ENCODE measurements at regions of chr19 and their contacts with region 1.

Region 1: GRCh38 chr19:41263850-41264580 is at the start of gene HNRNPUL1:
- DNase-seq: peak; percentile 99
- ATAC-seq: peak; percentile 75
- H3K4me3 Mint-ChIP-seq: peak within 1 kb of the TSS; percentile 82
- H3K27ac Mint-ChIP-seq: peak within 1 kb of the TSS; percentile 99
- H3K4me1 Mint-ChIP-seq: peaks cover 44% of the 10 kb centered on the region
- H3K27me3 Mint-ChIP-seq: peaks cover 2% of the 10 kb centered on the region
- total RNA-seq, gene HNRNPUL1: 332 to 340 TPM

Region 2: DNA sequence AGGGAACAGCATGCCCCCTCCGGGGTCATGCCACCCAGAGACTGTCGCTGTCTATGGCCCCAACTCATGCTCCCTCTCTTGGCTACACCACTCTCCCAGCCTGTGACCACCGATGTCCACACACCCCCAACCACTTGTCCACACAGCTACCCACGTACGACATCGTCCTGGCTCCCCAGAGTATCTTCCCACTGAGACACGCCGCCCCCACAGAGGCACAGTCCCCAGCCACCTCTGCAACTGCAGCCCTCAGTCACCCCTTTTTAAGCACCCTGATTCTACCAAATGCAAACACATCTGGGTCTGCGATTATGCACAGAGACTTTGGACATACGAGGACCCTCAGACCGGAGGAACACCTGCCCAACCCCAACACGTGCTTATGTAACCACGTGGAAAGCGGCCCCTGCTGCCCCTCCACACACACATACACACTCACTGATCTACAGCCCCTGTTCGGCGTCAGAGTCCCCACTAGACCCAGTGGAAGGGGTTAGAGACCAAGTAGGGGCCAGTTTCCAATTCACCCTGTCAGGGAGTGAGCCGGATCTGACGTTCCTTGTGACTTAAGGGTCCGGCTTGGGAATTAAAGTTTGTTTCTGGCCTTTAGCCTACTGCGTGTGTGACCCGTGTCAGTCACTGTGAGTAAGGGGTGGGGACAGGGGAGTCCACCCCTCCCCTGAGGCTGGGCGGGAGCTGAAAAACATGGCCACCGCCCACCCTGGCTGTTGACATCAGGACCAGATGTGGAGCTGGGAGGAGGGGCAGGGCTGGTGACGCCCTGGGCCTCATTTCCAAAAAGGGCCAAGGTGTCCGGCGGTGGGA is 56.9 kb before region 1 on chr19:
- CTCF ChIA-PET with region 1: interaction called, 95 read pairs
- POLR2A ChIA-PET with region 1: interaction called, 14 read pairs
- DNase-seq: no peak
- ATAC-seq: no peak
- H3K4me3 Mint-ChIP-seq: no peak overlapping the region
- H3K27ac Mint-ChIP-seq: no peak overlapping the region
- H3K4me1 Mint-ChIP-seq: peaks cover 8% of the 10 kb centered on the region
- H3K27me3 Mint-ChIP-seq: no peaks in the 10 kb centered on the region

Region 3: DNA sequence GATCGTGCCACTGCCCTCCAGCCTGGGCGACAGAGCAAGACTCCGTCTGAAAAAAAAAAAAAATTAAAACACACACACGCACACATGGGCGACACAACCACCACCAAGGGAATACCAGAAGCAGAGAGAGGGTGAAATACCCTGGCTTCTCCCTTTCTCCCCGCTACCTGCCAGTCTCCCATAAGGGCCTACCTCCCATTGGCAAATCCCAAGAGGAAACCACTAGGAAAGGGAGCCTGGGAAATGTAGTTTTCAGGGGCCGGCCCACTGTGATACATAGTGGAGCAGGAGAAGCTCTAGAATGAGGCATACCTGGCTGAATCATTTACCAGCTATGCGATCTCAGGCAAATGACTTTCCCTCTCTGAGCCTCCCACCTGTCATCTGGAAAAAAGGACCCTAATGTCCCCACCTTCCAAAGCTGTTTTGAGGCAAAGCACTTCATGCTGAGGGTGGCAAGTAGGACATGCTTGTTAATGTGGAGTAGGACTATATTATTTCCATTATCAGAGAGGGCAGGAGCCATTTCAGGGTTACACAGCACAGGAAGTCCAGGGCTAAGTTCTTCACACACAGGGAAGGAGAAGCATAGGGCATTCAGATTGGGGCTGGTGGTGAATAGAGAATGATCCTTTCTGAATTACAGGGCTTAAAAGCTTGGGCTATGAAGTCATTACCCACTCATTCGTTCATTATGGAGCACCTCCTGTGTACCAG is 14.2 kb before region 1 on chr19:
- CTCF ChIA-PET with region 1: interaction called, 11 read pairs
- POLR2A ChIA-PET with region 1: no interaction called
- DNase-seq: no peak
- ATAC-seq: no peak
- H3K4me3 Mint-ChIP-seq: no peak overlapping the region
- H3K27ac Mint-ChIP-seq: no peak overlapping the region
- H3K4me1 Mint-ChIP-seq: no peaks in the 10 kb centered on the region
- H3K27me3 Mint-ChIP-seq: peaks cover 4% of the 10 kb centered on the region

Region 4: DNA sequence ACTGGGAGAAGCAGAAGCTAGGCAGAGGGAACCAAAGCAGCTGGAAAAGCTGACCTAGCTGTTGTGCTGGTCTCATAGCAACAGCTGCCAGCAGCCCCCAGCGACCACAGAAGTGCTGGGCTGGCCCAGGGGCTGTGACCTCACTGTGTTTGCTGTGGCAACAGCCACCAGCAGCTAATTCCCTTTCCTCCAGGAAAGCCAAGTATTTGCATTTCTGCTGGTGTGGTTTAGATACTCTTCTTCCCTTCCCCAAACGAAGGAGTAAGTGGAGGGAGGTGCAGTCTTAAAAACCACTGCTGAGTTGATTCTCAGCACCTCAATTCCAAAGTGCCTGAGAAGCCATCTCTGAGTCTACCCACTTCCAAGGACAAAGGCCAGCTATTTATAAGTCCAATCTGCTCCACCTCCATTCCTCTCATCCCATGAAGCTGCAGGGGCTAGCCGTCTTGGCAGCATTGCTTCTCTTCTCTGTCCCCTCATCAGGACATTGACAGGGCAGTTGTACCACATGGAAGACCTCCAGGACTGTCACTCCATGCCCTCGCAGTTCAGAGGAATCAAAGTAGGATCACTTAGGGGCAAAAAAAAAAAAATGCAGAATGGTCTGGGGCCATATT is 34.4 kb after region 1 on chr19:
- CTCF ChIA-PET with region 1: interaction called, 138 read pairs
- POLR2A ChIA-PET with region 1: interaction called, 53 read pairs
- DNase-seq: peak; percentile 51
- ATAC-seq: peak; percentile 51
- H3K4me3 Mint-ChIP-seq: no peak overlapping the region
- H3K27ac Mint-ChIP-seq: peak overlapping the region; percentile 80
- H3K4me1 Mint-ChIP-seq: peaks cover 91% of the 10 kb centered on the region
- H3K27me3 Mint-ChIP-seq: no peaks in the 10 kb centered on the region

Region 5: DNA sequence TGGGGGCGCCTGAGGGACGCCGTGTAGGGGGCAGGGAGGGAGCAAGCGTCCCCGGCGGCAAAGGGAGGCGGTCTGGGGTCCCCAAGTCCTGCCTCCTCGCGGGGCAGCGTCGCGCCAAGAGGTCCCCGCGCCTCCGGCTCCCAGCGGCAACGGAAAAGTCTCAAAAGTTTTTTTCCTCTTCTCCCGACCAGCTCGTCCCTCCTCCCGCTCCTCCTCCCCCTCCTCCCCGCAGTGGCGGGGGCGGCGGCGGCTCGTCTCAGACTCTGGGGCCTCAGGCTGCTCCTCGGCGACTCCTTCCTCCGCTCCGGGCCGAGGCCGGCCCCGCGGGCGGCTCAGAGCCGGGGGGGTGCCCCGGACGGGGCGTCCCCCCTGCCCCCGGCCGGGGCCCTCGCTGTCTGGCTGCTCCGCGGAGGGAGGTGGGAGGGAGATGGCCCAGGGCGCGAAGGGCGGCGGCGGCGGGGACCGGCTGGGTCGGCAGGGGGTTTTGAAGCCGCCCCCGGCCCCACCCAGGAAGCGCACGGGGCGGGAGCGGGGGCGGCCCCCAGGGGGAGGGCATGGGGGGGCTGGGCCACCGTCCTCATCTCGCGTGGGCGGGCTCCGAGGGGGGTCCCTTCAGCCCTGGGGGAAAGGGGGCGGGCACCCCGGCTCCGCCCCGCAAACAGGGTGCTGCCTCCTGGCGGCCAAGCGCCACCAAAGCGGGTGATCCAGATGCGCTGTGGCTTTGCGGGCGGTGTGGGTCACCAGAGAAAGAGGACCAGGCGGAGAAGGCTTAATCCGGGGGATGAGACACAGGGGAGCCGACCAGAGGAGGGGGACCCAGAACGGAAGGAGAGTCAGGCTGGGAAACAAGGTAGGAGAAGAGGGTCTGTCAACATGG is 89.7 kb after region 1 on chr19 and contains the start of gene TGFB1:
- CTCF ChIA-PET with region 1: interaction called, 4 read pairs
- POLR2A ChIA-PET with region 1: interaction called, 13 read pairs
- DNase-seq: peak; percentile 95
- ATAC-seq: peak; percentile 54
- H3K4me3 Mint-ChIP-seq: peak within 1 kb of the TSS; percentile 90
- H3K27ac Mint-ChIP-seq: peak within 1 kb of the TSS; percentile 98
- H3K4me1 Mint-ChIP-seq: peaks cover 66% of the 10 kb centered on the region
- H3K27me3 Mint-ChIP-seq: no peaks in the 10 kb centered on the region
- total RNA-seq, gene TGFB1: 210 to 231 TPM

Measured in activated CD8-positive, alpha-beta T cell treated with anti-CD3 and anti-CD28 coated beads, Interleukin-2, amount 10 ng/mL, durations not matched to agents 7 days and 5 days (primary cell).